GM10248 (cell line): ENCODE measurements at regions of chr3 and their contacts with region 1.

Region 1: GRCh38 chr3:23845326-23846221 is 39.8 kb downstream of the UBE2E1 start:
- DNase-seq: no peak
- CTCF ChIP-seq: no peak

Region 2: GRCh38 chr3:23859016-23859743 is 13.6 kb after region 1 on chr3:
- CTCF ChIA-PET with region 1: interaction called, 18 read pairs
- POLR2A ChIA-PET with region 1: no interaction called
- DNase-seq: no peak
- CTCF ChIP-seq: no peak